ENCODE measurements at regions of chr7 and their contacts with region 1.

Region 1: DNA sequence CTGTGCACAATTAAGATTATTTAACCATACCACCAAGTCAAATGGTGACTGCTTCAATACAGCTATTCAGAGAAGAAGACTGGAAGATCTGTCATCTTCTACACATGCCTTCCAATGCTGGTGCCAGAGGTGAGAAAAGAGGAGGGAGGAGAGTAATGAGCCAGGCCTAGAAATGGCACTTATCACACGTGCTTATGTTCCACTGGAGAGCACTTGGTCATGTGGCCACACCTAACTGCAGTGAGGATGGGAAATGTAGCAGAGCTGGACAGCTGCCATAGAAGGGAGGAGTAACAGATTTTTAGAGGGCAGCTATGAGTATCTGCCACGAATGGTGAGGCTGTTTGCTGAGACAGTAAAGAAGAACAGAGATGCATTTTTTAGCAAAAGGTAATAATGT is 77.1 kb downstream of the MPLKIP start:
- DNase-seq: no peak
- ATAC-seq: peak in 3 of 4 donors; percentile 30 to 42 (median 33)
- H3K4me3 ChIP-seq: no peak overlapping the region
- H3K27ac ChIP-seq: no peak overlapping the region
- H3K4me1 ChIP-seq: peaks cover 0 to 3% (median 0%) of the 10 kb centered on the region in 4 donors
- H3K27me3 ChIP-seq: no peaks in the 10 kb centered on the region
- CTCF ChIP-seq: no peak
- POLR2A ChIP-seq: no peak

Region 2: DNA sequence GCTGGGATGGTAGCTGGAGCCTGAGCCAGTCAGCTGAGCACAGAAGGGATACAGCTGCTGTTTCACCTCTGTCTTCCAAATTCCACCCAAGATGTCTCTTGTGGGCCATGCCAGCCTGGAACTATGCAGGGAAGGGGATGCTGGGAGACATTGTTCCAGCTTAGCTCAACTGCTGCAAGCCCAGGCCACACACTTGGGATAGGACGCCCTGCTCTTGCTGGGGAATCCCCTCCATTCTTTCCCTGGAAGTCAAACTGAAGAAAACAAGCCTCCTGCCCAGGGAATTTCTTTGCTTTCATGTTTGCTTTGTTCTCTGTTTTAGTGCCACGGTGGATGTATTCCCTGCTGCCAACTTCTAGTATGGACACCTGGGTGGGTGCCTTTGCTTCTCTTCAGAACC is 162.4 kb before region 1 on chr7:
- intact Hi-C with region 1: loop called in 1 of 2 experiments (anchors 10 kb)
- DNase-seq: no peak
- ATAC-seq: no peak
- H3K4me3 ChIP-seq: no peak overlapping the region
- H3K27ac ChIP-seq: no peak overlapping the region
- H3K4me1 ChIP-seq: no peaks in the 10 kb centered on the region
- H3K27me3 ChIP-seq: no peaks in the 10 kb centered on the region
- CTCF ChIP-seq: no peak
- POLR2A ChIP-seq: no peak

Region 3: GRCh38 chr7:40000734-40001315 is 56.5 kb before region 1 on chr7:
- intact Hi-C with region 1: no loop called
- DNase-seq: no peak
- ATAC-seq: no peak
- H3K4me3 ChIP-seq: no peak overlapping the region
- H3K27ac ChIP-seq: no peak overlapping the region
- H3K4me1 ChIP-seq: no peaks in the 10 kb centered on the region
- H3K27me3 ChIP-seq: no peaks in the 10 kb centered on the region
- CTCF ChIP-seq: no peak
- POLR2A ChIP-seq: no peak

Measured in right lobe of liver (tissue), 6 donors.